Caco-2 (cell line): ENCODE measurements at regions of chr6 and their contacts with region 1.

Region 1: GRCh38 chr6:54204921-54205591 is 93.8 kb downstream of the MLIP start:
- DNase-seq: peak; percentile 72 to 75
- H3K4me3 ChIP-seq: no peak overlapping the region
- H3K4me3 Mint-ChIP-seq: peak overlapping the region; percentile 37
- H3K27ac Mint-ChIP-seq: peak overlapping the region; percentile 59
- H3K4me1 ChIP-seq: peaks cover 28% of the 10 kb centered on the region
- H3K4me1 Mint-ChIP-seq: peaks cover 17% of the 10 kb centered on the region
- H3K27me3 ChIP-seq: no peaks in the 10 kb centered on the region
- H3K27me3 Mint-ChIP-seq: no peaks in the 10 kb centered on the region
- CTCF ChIP-seq: no peak

Region 2: DNA sequence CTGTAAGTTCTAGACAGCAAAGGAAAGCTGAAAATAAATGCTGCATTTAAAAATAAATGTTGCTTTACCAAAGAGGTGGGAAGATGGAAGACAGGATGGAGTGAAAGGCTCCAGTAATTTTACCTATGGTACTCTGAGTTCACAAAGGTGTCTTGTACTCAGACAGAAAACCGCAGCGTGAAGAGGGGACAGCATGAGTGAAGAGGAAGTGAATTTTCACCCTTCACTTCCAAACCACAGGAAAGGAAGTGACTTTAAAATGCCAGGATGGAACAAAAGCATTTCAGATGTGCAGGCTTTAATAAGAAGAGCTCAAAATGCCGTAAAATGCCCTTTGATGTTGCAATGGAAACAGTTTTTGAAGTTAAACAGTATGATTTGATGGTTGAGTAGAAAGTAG is 12.0 kb after region 1 on chr6:
- CTCF ChIA-PET with region 1: no interaction called
- POLR2A ChIA-PET with region 1: no interaction called
- intact Hi-C with region 1: loop called (anchors 1 kb)
- DNase-seq: no peak
- H3K4me3 ChIP-seq: no peak overlapping the region
- H3K4me3 Mint-ChIP-seq: no peak overlapping the region
- H3K27ac Mint-ChIP-seq: no peak overlapping the region
- H3K4me1 ChIP-seq: no peaks in the 10 kb centered on the region
- H3K4me1 Mint-ChIP-seq: no peaks in the 10 kb centered on the region
- H3K27me3 ChIP-seq: no peaks in the 10 kb centered on the region
- H3K27me3 Mint-ChIP-seq: no peaks in the 10 kb centered on the region
- CTCF ChIP-seq: no peak